A673 (cell line): ENCODE measurements at regions of chr19 and their contacts with region 1.

Region 1: DNA sequence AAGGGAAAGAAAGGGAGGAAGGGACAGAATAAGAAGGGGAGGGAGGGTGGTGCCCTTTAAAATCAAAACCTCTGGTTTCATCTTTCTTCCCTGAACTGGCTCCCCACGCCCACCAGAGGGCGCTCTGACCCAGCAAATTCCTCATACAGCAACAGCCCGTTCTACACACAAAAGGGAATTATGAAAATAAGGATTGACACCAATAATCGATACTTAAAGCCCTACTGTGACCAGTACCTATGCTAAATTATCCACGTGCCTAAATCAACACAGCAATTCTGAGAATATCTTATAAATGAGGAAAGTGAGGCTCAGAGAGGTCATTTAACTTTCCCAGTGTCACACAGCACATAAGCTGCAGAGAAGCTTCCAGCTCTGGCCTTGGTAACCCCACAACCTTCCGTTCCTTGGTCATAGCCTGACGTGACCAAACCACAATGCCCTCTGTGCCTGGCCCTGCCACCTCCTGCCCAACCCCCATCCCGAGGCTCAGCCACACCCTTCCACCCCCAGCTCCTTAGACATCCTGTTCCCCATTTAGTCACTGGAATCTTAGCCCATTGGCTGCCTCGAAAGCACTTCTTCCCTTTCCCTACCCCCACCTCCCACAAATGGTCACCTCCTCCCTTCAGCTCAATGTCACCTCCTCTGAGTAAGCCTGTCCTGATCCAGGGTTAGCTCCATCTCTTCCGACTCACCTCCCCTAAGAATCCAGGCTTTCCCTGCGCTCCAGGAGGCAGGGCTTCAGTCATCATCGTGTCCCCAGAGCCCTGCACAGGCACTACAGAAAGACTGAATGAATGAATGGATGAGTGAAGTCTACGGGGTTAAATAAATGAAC is 34.2 kb upstream of the PNMA8B start:
- DNase-seq: peak; percentile 76
- H3K4me3 ChIP-seq: no peak overlapping the region
- H3K27ac ChIP-seq: no peak overlapping the region
- H3K4me1 ChIP-seq: peaks cover 10% of the 10 kb centered on the region
- H3K27me3 ChIP-seq: no peaks in the 10 kb centered on the region
- CTCF ChIP-seq: peak; percentile 93

Region 2: DNA sequence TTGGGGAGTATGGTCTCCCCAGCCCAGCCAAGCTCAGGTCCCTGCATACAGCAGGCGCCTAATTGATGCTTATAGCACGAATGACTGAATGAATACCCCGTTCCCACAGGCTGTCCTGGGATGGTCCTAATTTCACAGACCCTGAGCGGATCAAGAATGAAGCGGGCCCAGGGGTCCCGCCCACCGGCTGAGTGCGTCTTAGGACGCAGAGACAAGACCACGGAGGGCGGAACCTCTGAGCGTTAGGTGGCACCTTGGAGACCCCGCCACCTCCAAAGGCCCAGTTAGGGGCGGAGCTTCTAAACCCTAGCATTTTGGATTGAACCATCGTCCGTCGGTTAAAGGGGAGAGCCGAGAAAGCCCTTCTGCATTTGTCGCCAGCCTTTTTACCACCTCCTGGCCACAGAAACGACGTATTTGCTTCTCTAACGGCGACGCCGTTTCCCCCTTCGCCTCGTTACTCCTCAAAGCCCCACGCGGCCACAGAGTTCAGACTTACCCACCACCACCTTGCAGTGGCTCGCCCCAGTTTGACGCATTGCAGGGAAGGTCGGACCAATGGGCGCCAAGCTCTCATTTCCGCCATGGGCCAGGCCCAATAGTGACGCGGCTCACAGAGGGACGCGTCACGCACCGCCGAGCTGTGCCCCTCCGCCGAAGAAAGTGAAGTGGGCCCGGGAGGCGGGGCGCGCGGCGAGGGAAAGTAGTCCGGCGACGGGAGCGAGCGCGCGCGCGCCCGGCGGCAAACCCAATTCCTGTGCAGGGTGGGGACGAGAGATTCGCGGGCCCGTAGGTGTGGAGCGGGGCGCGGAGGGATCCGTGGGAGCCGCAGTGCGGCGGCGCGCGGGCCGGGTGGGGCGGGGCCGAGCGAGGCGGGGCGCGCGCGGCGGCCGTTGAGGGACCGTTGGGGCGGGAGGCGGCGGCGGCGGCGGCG is 70.8 kb after region 1 on chr19:
- CTCF ChIA-PET with region 1: interaction called, 3 read pairs
- POLR2A ChIA-PET with region 1: no interaction called
- intact Hi-C with region 1: loop called (anchors 5 kb)
- DNase-seq: peak; percentile 98
- H3K4me3 ChIP-seq: peak overlapping the region; percentile 100
- H3K27ac ChIP-seq: peak overlapping the region; percentile 100
- H3K4me1 ChIP-seq: peaks cover 10% of the 10 kb centered on the region
- H3K27me3 ChIP-seq: no peaks in the 10 kb centered on the region
- CTCF ChIP-seq: no peak